T-cell (primary cell): ENCODE measurements at regions of chr1 and their contacts with region 1.

Region 1: GRCh38 chr1:98133131-98133530 is 212.3 kb upstream of the DPYD start:
- DNase-seq: no peak
- ATAC-seq: no peak
- H3K4me3 ChIP-seq: no peak overlapping the region
- H3K4me3 Mint-ChIP-seq: no peak overlapping the region
- H3K27ac ChIP-seq: no peak overlapping the region
- H3K27ac Mint-ChIP-seq: no peak overlapping the region
- H3K4me1 ChIP-seq: no peaks in the 10 kb centered on the region
- H3K4me1 Mint-ChIP-seq: no peaks in the 10 kb centered on the region
- H3K27me3 ChIP-seq: no peaks in the 10 kb centered on the region
- H3K27me3 Mint-ChIP-seq: no peaks in the 10 kb centered on the region

Region 2: DNA sequence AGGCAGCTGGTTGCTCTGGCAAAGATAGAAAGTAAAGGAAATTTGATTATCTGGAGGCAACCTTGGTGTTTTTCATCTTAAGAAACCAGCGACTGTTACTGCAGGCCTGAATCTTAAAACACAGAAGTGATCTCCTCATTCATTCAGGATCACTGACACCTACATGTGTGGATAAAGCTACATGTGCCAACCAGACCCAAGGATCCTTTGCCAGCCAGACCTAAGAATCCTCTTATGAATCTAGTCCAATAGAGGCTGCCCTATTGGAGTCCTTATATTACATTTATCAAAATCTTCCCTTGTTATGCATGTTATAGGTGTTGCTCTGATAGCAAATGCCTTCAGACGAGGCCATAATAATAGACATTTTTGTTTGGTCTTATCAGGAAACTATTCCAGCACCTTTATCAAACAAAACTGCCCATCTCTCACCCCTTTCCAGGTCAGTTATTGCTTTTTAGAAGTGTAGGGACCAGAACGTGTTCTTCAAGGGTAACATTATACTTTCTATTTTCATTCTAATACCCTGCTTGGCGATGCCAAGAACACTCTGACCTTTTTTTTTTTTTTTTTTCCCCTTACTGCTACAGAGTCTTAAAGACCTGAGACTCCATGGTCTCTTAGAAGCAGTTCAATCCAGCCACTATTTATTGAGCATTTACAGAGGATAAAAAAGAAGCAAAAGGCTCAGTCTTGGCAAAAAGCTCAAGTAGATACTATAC is 1587.0 kb before region 1 on chr1:
- CTCF ChIA-PET with region 1: no interaction called
- POLR2A ChIA-PET with region 1: interaction called in 1 of 2 experiments, 13 read pairs
- DNase-seq: no peak
- ATAC-seq: no peak
- H3K4me3 ChIP-seq: no peak overlapping the region
- H3K4me3 Mint-ChIP-seq: no peak overlapping the region
- H3K27ac ChIP-seq: no peak overlapping the region
- H3K27ac Mint-ChIP-seq: no peak overlapping the region
- H3K4me1 ChIP-seq: no peaks in the 10 kb centered on the region
- H3K4me1 Mint-ChIP-seq: no peaks in the 10 kb centered on the region
- H3K27me3 ChIP-seq: no peaks in the 10 kb centered on the region
- H3K27me3 Mint-ChIP-seq: no peaks in the 10 kb centered on the region